HEK293 (cell line): ENCODE measurements at regions of chr10 and their contacts with region 1.

Region 1: GRCh38 chr10:97869091-97870042 is 19.7 kb downstream of the GOLGA7B start:
- H3K4me3 ChIP-seq: no peak overlapping the region
- H3K27ac ChIP-seq: peak overlapping the region; percentile 20; the same call in 1 of the 2 replicates
- H3K4me1 ChIP-seq: peaks cover 3% of the 10 kb centered on the region; the same call in 1 of the 2 replicates
- CTCF ChIP-seq: peak; percentile 96

Region 2: DNA sequence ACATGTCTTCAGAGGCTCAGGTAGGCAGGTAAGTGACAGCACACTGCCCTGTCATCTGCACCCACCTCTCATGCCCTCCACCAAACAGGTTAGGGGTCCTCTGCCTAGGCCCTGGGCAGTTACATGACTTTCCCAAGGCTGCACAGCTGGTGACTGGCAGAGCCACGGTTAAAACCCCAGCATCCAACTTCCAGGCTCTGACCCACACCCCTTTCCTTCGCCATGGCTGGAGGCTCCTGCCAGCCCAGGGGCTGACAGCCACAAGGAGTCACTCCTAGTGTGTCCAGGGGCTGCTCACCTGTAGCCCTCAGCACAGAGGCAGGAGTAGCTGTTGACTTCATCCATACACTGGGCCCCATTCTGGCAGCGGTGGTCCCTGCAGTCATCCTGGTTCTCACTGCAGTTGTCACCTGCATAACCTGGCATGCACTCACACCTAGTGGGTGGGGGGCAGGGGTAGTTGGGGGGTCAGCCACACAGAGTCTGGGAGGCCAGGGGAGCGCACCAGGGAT is 858.6 kb before region 1 on chr10:
- CTCF ChIA-PET with region 1: no interaction called
- POLR2A ChIA-PET with region 1: no interaction called
- H3K4me3 ChIP-seq: no peak overlapping the region
- H3K27ac ChIP-seq: no peak overlapping the region
- H3K4me1 ChIP-seq: no peaks in the 10 kb centered on the region
- CTCF ChIP-seq: no peak

Region 3: GRCh38 chr10:97759158-97759887 is 110.0 kb before region 1 on chr10:
- CTCF ChIA-PET with region 1: interaction called, 36 read pairs
- POLR2A ChIA-PET with region 1: interaction called, 3 read pairs
- H3K4me3 ChIP-seq: no peak overlapping the region
- H3K27ac ChIP-seq: no peak overlapping the region
- H3K4me1 ChIP-seq: no peaks in the 10 kb centered on the region
- CTCF ChIP-seq: peak; percentile 93

Region 4: DNA sequence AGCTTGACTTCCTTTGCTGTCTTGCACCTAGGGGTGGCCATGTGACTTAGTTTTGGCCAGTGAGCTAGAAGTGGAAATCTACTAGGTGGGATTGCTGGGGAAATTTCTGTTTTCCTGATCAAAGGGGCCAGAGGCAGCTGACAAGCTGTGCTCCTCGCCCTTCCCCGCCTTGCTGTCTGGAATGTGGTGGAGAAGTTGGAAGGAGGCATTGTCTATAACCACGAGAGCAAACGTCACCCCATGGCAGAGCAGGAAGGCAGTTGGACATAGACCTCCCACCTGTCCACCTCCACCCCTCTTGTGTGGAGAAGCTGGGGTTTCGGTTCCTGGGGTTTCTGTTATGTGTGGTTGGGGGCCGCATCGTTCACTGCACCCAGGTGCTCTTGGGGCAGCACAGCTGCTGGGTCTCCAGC is 104.8 kb before region 1 on chr10:
- CTCF ChIA-PET with region 1: interaction called, 36 read pairs
- POLR2A ChIA-PET with region 1: interaction called, 3 read pairs
- H3K4me3 ChIP-seq: no peak overlapping the region
- H3K27ac ChIP-seq: no peak overlapping the region
- H3K4me1 ChIP-seq: no peaks in the 10 kb centered on the region
- CTCF ChIP-seq: no peak

Region 5: GRCh38 chr10:97888641-97889262 is 19.4 kb after region 1 on chr10:
- CTCF ChIA-PET with region 1: interaction called, 12 read pairs
- POLR2A ChIA-PET with region 1: interaction called, 7 read pairs
- H3K4me3 ChIP-seq: peak overlapping the region; percentile 0; the same call in 1 of the 2 replicates
- H3K27ac ChIP-seq: peak overlapping the region; percentile 78
- H3K4me1 ChIP-seq: peaks cover 17% of the 10 kb centered on the region
- CTCF ChIP-seq: no peak; the same call in 1 of the 2 replicates

Region 6: GRCh38 chr10:97921581-97922021 is 52.2 kb after region 1 on chr10:
- CTCF ChIA-PET with region 1: no interaction called
- POLR2A ChIA-PET with region 1: no interaction called
- H3K4me3 ChIP-seq: no peak overlapping the region
- H3K27ac ChIP-seq: no peak overlapping the region
- H3K4me1 ChIP-seq: no peaks in the 10 kb centered on the region
- CTCF ChIP-seq: no peak

Region 7: GRCh38 chr10:97932932-97933530 is 63.7 kb after region 1 on chr10:
- CTCF ChIA-PET with region 1: no interaction called
- POLR2A ChIA-PET with region 1: no interaction called
- H3K4me3 ChIP-seq: no peak overlapping the region
- H3K27ac ChIP-seq: no peak overlapping the region
- H3K4me1 ChIP-seq: no peaks in the 10 kb centered on the region
- CTCF ChIP-seq: no peak